MCF 10A (cell line): ENCODE measurements at regions of chr7 and their contacts with region 1.

Region 1: DNA sequence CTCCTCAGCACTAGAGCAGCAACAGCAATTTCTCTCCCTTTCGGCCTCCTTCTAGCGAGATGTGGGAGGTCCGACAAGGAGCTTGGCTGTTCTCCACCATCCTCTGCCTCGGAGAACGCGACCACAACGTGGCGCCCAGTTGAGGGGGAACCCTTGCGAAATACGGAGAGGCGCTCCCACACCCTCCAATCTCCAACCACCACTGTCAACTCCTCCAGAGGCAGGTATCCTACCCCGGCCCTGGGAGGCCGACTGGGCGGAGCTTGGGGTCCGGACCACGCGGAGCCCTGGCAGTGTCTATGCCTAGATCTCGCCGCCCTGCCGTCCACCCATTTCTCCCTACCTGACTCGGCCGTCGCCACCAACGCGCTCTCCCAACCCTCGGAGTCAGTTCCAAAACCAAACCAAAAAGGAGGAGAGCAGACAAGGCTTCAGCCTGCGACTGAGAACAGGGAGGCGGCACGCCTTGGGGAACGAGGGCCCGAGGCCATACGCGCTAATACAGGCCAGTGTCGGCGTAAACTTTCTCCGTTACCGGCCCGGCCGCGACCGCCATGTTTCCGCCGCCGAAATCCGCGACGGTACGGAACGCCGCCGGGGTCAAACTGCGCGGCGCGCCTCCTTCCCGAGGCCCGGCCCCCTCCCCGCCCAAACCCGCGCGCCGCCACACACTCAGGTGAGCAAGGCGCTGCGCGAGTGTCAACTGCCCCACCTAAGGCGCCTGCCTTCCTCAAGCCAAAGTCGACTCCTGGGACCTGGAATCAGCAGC is at the start of gene TMEM168:
- DNase-seq: peak; percentile 88
- H3K4me3 Mint-ChIP-seq: peak within 1 kb of the TSS; percentile 83
- H3K27ac Mint-ChIP-seq: peak within 1 kb of the TSS; percentile 83
- H3K4me1 Mint-ChIP-seq: peaks cover 33% of the 10 kb centered on the region
- H3K27me3 Mint-ChIP-seq: no peaks in the 10 kb centered on the region
- CTCF ChIP-seq: no peak
- total RNA-seq, gene TMEM168: 29.5 and 32.5 TPM in 2 replicates

Region 2: DNA sequence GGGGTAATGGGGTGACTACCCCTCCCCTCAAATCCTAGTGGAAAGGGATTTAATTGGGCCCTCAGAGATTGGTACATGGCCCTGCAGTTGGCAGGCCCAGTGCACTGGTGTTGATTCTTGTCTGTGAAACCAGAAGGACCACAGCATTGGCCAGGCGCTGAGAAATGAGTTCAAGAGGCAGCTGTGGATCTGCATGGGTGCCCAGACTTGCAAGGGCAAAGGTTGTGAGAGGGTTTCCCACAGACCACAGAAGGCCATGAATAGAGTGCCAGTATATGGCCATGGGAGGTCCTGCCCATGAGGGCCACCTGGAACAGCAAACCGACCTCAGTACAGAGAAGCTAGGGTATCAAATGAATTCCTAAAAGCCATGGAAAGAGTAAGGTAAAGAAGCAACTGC is 32.7 kb before region 1 on chr7:
- CTCF ChIA-PET with region 1: no interaction called
- POLR2A ChIA-PET with region 1: interaction called, 10 read pairs
- intact Hi-C with region 1: no loop called
- DNase-seq: no peak
- H3K4me3 Mint-ChIP-seq: no peak overlapping the region
- H3K27ac Mint-ChIP-seq: no peak overlapping the region
- H3K4me1 Mint-ChIP-seq: peaks cover 14% of the 10 kb centered on the region
- H3K27me3 Mint-ChIP-seq: no peaks in the 10 kb centered on the region
- CTCF ChIP-seq: no peak

Region 3: DNA sequence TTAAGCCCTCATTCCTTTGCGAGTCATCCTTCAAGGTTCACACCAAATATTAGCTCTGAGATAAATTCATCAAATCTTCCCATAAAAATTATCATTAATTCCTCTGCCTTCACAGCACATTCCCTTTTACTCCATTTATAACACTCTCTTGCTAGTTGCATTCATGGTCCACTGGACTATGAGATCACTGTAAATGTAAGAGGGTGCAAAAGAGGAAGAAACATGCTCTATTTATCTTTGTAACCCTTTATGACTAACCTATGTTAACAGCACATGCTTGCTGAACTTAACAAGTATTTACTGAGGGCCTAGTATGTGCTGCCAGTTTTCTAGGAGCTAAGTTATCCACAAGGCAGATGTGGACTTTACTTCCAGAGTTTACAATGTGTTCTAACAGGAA is 86.9 kb after region 1 on chr7:
- CTCF ChIA-PET with region 1: no interaction called
- POLR2A ChIA-PET with region 1: no interaction called
- intact Hi-C with region 1: no loop called
- DNase-seq: no peak
- H3K4me3 Mint-ChIP-seq: no peak overlapping the region
- H3K27ac Mint-ChIP-seq: no peak overlapping the region
- H3K4me1 Mint-ChIP-seq: peaks cover 5% of the 10 kb centered on the region
- H3K27me3 Mint-ChIP-seq: no peaks in the 10 kb centered on the region
- CTCF ChIP-seq: no peak

Region 4: GRCh38 chr7:113963356-113963755 is 1173.4 kb after region 1 on chr7:
- CTCF ChIA-PET with region 1: no interaction called
- POLR2A ChIA-PET with region 1: no interaction called
- intact Hi-C with region 1: no loop called
- DNase-seq: no peak
- H3K4me3 Mint-ChIP-seq: no peak overlapping the region
- H3K27ac Mint-ChIP-seq: no peak overlapping the region
- H3K4me1 Mint-ChIP-seq: no peaks in the 10 kb centered on the region
- H3K27me3 Mint-ChIP-seq: no peaks in the 10 kb centered on the region
- CTCF ChIP-seq: no peak